AG04450 (cell line): ENCODE measurements at regions of chr11 and their contacts with region 1.

Region 1: DNA sequence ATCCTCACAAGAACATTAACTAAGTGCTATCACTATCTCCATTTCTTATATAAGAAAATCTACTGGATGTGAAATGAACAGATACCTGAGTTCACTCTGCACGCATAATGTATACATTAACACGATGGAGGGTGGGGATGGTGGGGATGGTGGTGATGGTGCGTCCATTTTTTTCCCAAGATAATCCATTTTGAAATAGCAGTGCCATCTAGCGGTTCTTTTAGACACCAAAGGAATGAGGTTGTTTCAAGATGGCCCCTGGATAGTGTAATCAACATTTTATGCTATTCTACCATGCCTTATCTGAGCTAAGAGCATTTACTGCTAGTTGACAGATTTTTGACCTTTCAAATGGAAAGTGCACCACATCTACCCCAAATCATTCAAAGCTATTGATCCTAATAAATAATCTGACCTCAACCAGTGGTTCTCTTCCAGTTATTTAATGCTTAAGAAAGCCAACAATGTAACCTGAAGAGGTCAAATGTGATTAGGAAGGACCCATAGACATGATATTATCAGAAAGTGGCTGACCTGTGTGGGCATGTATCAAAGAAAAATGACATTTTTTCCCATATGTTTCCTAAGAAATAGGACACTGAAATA is 714.7 kb upstream of the TENM4 start:
- DNase-seq: no peak
- H3K4me3 ChIP-seq: no peak overlapping the region
- H3K27ac ChIP-seq: no peak overlapping the region
- H3K27me3 ChIP-seq: no peaks in the 10 kb centered on the region
- CTCF ChIP-seq: peak; percentile 73

Region 2: GRCh38 chr11:79708300-79708932 is 447.1 kb before region 1 on chr11:
- CTCF ChIA-PET with region 1: interaction called, 93 read pairs
- POLR2A ChIA-PET with region 1: no interaction called
- DNase-seq: peak; percentile 7
- H3K4me3 ChIP-seq: no peak overlapping the region
- H3K27ac ChIP-seq: no peak overlapping the region
- H3K27me3 ChIP-seq: no peaks in the 10 kb centered on the region
- CTCF ChIP-seq: peak; percentile 73

Region 3: DNA sequence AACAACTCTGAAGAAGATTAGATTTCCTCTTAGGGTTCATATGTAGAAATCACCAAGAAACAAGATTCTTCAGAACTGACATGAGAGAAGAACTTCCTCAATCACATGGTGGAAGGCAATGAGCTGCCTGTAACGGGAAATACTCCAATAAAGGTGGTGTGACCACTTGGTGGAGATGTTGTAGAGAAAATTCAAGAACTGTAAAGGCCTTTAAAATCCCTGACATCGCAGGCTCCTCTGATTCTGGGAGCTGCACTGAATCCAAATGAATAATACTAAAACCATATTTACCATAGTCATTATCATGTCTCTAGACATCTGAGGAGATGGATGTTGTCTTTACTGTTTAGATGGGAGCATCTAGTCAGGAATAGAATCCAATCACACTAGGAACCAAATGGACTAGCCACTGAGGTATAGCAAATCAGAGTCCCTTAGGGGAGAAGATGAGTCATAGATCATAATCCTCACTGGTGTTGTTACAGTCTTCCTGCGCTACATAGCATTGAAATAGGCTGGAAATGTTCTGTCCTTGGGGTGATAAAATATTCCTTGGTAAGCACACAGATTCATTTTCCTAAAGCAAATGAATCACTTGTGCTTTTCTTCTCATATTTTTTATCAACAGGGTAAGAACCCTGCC is 393.1 kb before region 1 on chr11:
- CTCF ChIA-PET with region 1: interaction called, 17 read pairs
- POLR2A ChIA-PET with region 1: no interaction called
- DNase-seq: no peak
- H3K4me3 ChIP-seq: no peak overlapping the region
- H3K27ac ChIP-seq: no peak overlapping the region
- H3K27me3 ChIP-seq: no peaks in the 10 kb centered on the region
- CTCF ChIP-seq: 0 out of 2 replicates have a peak, but pooled peaks have one; percentile 20

Region 4: GRCh38 chr11:80167766-80168165 is 12.3 kb after region 1 on chr11:
- CTCF ChIA-PET with region 1: interaction called, 13 read pairs
- POLR2A ChIA-PET with region 1: no interaction called
- DNase-seq: no peak
- H3K4me3 ChIP-seq: no peak overlapping the region
- H3K27ac ChIP-seq: no peak overlapping the region
- H3K27me3 ChIP-seq: no peaks in the 10 kb centered on the region
- CTCF ChIP-seq: no peak